ENCODE measurements at regions of chr11 and their contacts with region 1.

Region 1: DNA sequence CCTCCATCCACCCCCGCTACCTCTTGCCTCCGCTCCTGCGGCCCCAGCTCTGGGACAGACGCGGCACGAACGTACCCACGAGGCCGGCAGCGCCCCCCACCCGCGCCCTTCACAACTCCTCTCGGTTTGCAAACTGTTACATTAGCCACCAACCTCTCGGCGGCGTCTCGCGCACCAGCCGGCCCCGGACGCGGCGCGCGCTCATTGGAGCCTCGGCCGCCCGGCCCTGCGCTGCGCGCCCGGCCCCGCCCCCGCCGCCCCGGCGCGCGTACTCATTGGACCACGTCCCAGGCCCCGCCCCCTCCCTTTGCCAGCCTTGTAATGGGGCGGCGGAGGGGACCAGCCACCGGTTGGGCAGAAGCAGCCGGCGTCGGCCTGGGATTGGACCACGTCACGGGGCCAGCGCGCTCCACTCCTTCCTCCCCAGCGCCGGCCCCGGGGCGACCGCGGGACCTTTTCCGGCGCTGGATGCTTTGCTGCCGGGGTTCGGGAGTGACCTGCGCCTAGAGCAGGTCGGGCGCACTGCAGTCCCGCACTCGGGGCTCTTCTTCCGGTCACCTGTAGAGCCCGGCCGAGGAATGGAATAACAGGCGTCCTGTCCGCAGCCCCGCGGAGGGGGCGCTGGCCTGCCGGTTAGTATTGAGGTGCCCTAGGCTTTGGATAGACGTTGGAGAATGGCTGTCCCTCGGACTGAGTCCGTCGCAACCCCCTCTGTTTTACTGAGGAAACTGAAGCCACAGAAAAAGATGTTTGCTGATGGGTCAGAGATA is at the start of gene HYOU1:
- DNase-seq: peak; percentile 100
- ATAC-seq: peak; percentile 96
- H3K4me3 Mint-ChIP-seq: peak within 1 kb of the TSS; percentile 82
- H3K27ac Mint-ChIP-seq: peak within 1 kb of the TSS; percentile 94
- H3K4me1 Mint-ChIP-seq: peaks cover 34% of the 10 kb centered on the region
- H3K27me3 Mint-ChIP-seq: no peaks in the 10 kb centered on the region
- total RNA-seq, gene HYOU1: 104 to 114 TPM

Region 2: GRCh38 chr11:118757876-118758399 is 299.2 kb before region 1 on chr11:
- CTCF ChIA-PET with region 1: no interaction called
- POLR2A ChIA-PET with region 1: no interaction called
- intact Hi-C with region 1: no loop called
- DNase-seq: no peak
- ATAC-seq: no peak
- H3K4me3 Mint-ChIP-seq: no peak overlapping the region
- H3K27ac Mint-ChIP-seq: no peak overlapping the region
- H3K4me1 Mint-ChIP-seq: no peaks in the 10 kb centered on the region
- H3K27me3 Mint-ChIP-seq: no peaks in the 10 kb centered on the region

Region 3: GRCh38 chr11:118997627-118998387 is 59.4 kb before region 1 on chr11 and contains the start of gene CENATAC:
- CTCF ChIA-PET with region 1: interaction called, 5 read pairs
- POLR2A ChIA-PET with region 1: no interaction called
- intact Hi-C with region 1: loop called in 1 of 2 experiments (anchors 1 kb)
- DNase-seq: peak; percentile 98
- ATAC-seq: peak; percentile 93
- H3K4me3 Mint-ChIP-seq: peak within 1 kb of the TSS; percentile 88
- H3K27ac Mint-ChIP-seq: peak within 1 kb of the TSS; percentile 98
- H3K4me1 Mint-ChIP-seq: peaks cover 32% of the 10 kb centered on the region
- H3K27me3 Mint-ChIP-seq: no peaks in the 10 kb centered on the region
- total RNA-seq, gene CENATAC: 23.7 to 26.2 TPM

Region 4: DNA sequence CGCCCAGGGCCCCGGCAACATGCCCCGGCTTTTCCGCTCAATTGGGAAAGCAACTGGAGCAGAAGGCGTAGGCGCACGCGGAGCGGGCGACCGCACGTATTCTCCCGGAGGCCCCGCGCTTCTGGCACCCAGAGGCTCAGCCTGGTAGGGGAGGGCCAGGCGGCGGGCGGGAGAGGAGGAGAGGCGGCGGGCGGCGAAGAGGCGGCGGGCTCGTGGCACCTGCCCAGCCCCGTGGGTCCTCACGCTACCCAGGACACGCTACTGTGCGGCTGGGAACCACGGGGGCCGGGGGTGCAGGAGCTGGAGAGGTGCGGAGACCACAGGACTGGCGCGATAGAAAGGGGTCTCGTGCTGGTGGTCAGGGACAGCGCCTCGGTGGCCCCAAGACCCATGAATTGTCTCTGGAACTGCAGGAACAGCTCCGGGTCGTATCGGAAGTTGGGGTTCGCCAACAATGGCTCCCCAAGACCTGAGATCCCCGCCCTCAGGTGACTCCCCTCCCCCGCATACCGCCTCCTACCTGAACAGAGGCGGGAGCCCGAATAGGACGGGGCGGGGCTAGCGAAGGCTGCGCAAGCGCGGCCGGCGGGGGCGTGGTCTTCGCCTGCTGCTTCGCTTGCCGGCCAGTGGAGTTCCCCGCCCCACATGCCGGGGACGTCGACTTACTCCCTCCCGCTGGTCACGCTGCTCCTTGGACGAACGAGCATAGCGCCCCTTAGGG is 26.7 kb before region 1 on chr11 and contains the start of gene SLC37A4:
- CTCF ChIA-PET with region 1: interaction called, 4 read pairs
- POLR2A ChIA-PET with region 1: no interaction called
- intact Hi-C with region 1: loop called (anchors 1 kb)
- DNase-seq: peak; percentile 99
- ATAC-seq: peak; percentile 94
- H3K4me3 Mint-ChIP-seq: peak within 1 kb of the TSS; percentile 76
- H3K27ac Mint-ChIP-seq: peak within 1 kb of the TSS; percentile 86
- H3K4me1 Mint-ChIP-seq: peaks cover 19% of the 10 kb centered on the region
- H3K27me3 Mint-ChIP-seq: no peaks in the 10 kb centered on the region
- total RNA-seq, gene SLC37A4: 26.2 to 36.2 TPM

Region 5: GRCh38 chr11:119084663-119085436 is 27.7 kb after region 1 on chr11 and contains the start of gene HMBS:
- CTCF ChIA-PET with region 1: interaction called, 6 read pairs
- POLR2A ChIA-PET with region 1: no interaction called
- intact Hi-C with region 1: loop called in 1 of 2 experiments (anchors 1 kb)
- DNase-seq: peak; percentile 96
- ATAC-seq: peak; percentile 94
- H3K4me3 Mint-ChIP-seq: peak within 1 kb of the TSS; percentile 97
- H3K27ac Mint-ChIP-seq: peak within 1 kb of the TSS; percentile 92
- H3K4me1 Mint-ChIP-seq: peaks cover 22% of the 10 kb centered on the region
- H3K27me3 Mint-ChIP-seq: no peaks in the 10 kb centered on the region
- total RNA-seq, gene HMBS: 39.8 to 41.8 TPM

Region 6: DNA sequence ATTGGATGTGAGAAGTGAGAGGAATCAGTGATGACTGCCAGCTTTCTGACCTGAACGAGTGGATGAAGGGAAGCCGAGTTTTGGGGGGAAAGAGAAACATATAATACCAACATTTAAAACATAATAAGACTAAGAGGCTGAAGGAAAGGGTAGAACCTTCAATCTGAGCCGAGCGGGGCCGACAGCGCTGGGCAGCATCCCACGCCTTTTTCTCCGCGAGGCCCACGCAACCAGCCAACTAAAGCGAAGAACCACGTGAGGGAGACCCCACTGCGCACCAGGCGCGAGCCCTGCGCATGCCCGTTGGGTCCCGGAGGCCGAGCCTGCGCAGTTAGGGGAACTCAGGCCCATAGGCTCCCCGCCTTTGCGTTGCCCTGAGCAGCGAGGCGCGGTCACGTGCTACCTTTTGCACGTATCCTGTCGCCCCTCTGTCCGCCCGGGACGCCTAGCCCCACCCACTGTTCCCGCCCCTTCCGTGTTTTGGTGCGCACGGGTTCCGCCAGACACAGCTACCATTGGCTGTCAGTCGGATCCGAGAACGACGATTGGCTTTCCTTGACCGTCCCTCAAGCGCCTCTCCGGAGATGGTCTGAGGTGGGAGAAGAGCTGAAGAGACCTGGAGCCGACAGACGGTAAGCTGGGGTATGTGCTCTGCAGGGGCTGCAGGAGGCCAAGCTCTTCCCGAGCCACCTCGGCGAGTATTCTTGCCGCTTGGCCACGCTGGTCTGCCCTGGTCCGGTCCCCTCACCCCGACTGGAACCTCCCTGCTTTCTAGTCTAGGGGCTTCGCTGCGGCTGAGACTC is 64.0 kb after region 1 on chr11 and contains the start of gene HINFP:
- CTCF ChIA-PET with region 1: no interaction called
- POLR2A ChIA-PET with region 1: interaction called, 3 read pairs
- intact Hi-C with region 1: loop called (anchors 1 to 2 kb)
- DNase-seq: peak; percentile 100
- ATAC-seq: peak; percentile 98
- H3K4me3 Mint-ChIP-seq: peak within 1 kb of the TSS; percentile 94
- H3K27ac Mint-ChIP-seq: peak within 1 kb of the TSS; percentile 91
- H3K4me1 Mint-ChIP-seq: peaks cover 25% of the 10 kb centered on the region
- H3K27me3 Mint-ChIP-seq: no peaks in the 10 kb centered on the region
- total RNA-seq, gene HINFP: 24.0 to 27.2 TPM

Region 7: GRCh38 chr11:119709638-119710346 is 652.6 kb after region 1 on chr11:
- CTCF ChIA-PET with region 1: no interaction called
- POLR2A ChIA-PET with region 1: no interaction called
- intact Hi-C with region 1: no loop called
- DNase-seq: peak; percentile 25
- ATAC-seq: peak; percentile 19
- H3K4me3 Mint-ChIP-seq: no peak overlapping the region
- H3K27ac Mint-ChIP-seq: no peak overlapping the region
- H3K4me1 Mint-ChIP-seq: no peaks in the 10 kb centered on the region
- H3K27me3 Mint-ChIP-seq: peaks cover 18% of the 10 kb centered on the region

Measured in activated CD4-positive, alpha-beta T cell treated with anti-CD3 and anti-CD28 coated beads for 36 hours (primary cell).